ENCODE measurements at regions of chr10 and their contacts with region 1.

Region 1: DNA sequence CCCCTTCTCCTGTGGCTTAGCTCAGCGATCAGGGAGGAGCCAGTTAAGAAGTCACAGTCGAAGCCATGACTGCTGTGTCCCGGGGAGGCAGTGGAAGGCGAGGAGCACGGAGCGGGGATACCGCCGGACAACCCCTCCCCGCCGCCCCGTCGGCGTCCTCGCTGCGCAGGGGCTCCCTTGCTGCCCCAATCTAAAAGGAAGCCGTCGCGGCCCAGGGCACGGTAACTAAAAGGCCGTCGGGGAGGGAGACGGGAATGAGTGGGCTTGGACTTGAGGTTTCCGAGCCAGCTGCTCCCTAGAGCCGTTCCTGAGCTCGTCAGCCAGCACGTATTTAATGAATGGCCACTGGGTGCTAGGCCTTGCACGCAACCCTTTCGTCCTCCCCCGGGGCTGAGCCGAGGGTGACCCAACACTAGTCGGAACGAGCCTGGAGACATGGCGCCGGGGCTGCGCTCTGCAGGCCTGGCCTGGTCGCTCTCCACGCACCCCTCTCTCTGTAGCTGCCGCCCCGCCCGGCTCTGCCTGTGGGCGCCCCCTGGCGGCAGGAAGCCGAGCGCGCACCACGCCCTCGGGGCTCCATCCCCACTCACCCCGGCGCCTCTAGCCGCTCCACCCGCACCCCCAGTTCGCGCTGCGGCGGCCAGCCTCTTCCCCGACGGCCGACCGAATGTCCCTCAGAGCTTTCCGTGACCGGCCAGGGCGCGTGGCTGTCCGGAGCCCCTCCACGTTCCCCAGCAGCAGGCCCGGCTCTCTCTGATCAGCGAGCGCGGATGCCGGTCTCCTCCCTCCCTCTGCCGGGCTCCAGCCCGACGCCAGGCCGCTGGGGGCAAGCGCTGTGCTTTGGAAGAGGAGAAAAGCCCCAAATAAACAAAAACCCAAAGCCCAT is 29.3 kb upstream of the KCNK18 start:
- DNase-seq: peak; percentile 72
- ATAC-seq: peak; percentile 81
- H3K4me3 Mint-ChIP-seq: peak overlapping the region; percentile 6
- H3K27ac Mint-ChIP-seq: no peak overlapping the region
- H3K4me1 Mint-ChIP-seq: peaks cover 32% of the 10 kb centered on the region
- H3K27me3 Mint-ChIP-seq: peaks cover 79% of the 10 kb centered on the region
- CTCF ChIP-seq: peak; percentile 91

Region 2: GRCh38 chr10:116787893-116788665 is 380.0 kb before region 1 on chr10:
- CTCF ChIA-PET with region 1: interaction called, 37 read pairs
- POLR2A ChIA-PET with region 1: no interaction called
- intact Hi-C with region 1: no loop called
- DNase-seq: peak; percentile 91
- ATAC-seq: peak; percentile 93
- H3K4me3 Mint-ChIP-seq: peak overlapping the region; percentile 42
- H3K27ac Mint-ChIP-seq: peak overlapping the region; percentile 72
- H3K4me1 Mint-ChIP-seq: peaks cover 12% of the 10 kb centered on the region
- H3K27me3 Mint-ChIP-seq: peaks cover 10% of the 10 kb centered on the region
- CTCF ChIP-seq: peak; percentile 98

Region 3: GRCh38 chr10:116796910-116797513 is 371.0 kb before region 1 on chr10:
- CTCF ChIA-PET with region 1: interaction called, 111 read pairs
- POLR2A ChIA-PET with region 1: no interaction called
- intact Hi-C with region 1: no loop called
- DNase-seq: peak; percentile 78
- ATAC-seq: peak; percentile 90
- H3K4me3 Mint-ChIP-seq: no peak overlapping the region
- H3K27ac Mint-ChIP-seq: no peak overlapping the region
- H3K4me1 Mint-ChIP-seq: peaks cover 5% of the 10 kb centered on the region
- H3K27me3 Mint-ChIP-seq: peaks cover 23% of the 10 kb centered on the region
- CTCF ChIP-seq: peak; percentile 78

Region 4: GRCh38 chr10:117131376-117132327 is 36.4 kb before region 1 on chr10:
- CTCF ChIA-PET with region 1: interaction called, 43 read pairs
- POLR2A ChIA-PET with region 1: no interaction called
- intact Hi-C with region 1: loop called (anchors 2 kb)
- DNase-seq: peak; percentile 48
- ATAC-seq: peak; percentile 10
- H3K4me3 Mint-ChIP-seq: peak overlapping the region; percentile 29
- H3K27ac Mint-ChIP-seq: no peak overlapping the region
- H3K4me1 Mint-ChIP-seq: peaks cover 29% of the 10 kb centered on the region
- H3K27me3 Mint-ChIP-seq: peaks cover 79% of the 10 kb centered on the region
- CTCF ChIP-seq: no peak

Region 5: DNA sequence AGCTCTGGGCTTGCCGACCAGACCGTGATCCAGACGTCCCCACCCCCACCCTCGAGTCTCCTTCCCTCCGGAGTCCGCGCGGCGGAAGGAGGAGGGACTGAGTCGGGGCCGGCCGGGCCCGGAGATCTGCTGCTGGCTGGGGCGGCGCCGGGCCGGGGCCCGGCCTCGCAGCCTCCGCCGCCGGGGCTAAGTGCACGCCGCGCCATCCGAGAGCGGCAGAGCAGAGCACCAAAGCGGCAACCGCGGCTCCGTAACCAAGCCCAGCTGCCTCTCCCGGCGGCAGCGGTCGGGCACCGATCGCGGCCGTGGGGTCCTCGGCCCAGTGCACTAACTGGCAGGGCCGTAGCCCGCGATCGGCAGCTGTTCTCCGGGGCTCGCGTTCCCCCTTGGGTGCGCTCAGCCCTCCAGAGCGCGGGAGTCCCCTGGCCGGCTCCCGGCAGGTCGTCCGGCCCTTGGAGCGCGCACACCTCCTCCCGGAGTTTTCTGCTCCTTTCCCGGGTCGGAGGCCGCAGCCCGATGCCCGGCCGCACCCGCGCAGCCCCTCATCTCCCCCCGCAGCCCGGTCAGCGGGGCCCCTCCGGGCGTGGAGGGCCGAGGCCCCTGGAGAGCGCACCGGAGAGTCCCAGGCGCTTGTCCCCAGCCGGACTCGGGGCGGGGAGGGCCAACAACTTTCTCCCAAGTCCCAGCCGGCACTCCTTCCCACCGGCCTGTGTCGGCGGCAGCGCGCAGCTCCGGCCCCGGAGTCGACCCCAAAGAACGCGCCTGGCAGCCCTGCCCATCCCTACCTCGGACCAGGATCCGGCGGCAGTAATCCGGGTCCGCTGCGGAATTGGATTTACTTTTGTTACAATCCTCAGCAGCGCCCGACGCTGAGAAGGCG is 30.8 kb before region 1 on chr10:
- CTCF ChIA-PET with region 1: interaction called, 43 read pairs
- POLR2A ChIA-PET with region 1: no interaction called
- intact Hi-C with region 1: loop called (anchors 2 kb)
- DNase-seq: peak; percentile 14
- ATAC-seq: peak; percentile 17
- H3K4me3 Mint-ChIP-seq: no peak overlapping the region
- H3K27ac Mint-ChIP-seq: no peak overlapping the region
- H3K4me1 Mint-ChIP-seq: peaks cover 16% of the 10 kb centered on the region
- H3K27me3 Mint-ChIP-seq: peaks cover 66% of the 10 kb centered on the region
- CTCF ChIP-seq: no peak

Region 6: GRCh38 chr10:117537436-117537903 is 369.4 kb after region 1 on chr10:
- CTCF ChIA-PET with region 1: no interaction called
- POLR2A ChIA-PET with region 1: no interaction called
- intact Hi-C with region 1: loop called (anchors 10 kb)
- DNase-seq: no peak
- ATAC-seq: no peak
- H3K4me3 Mint-ChIP-seq: no peak overlapping the region
- H3K27ac Mint-ChIP-seq: no peak overlapping the region
- H3K4me1 Mint-ChIP-seq: peaks cover 11% of the 10 kb centered on the region
- H3K27me3 Mint-ChIP-seq: peaks cover 66% of the 10 kb centered on the region
- CTCF ChIP-seq: peak; percentile 79

Measured in activated CD8-positive, alpha-beta T cell treated with anti-CD3 and anti-CD28 coated beads for 36 hours (primary cell).